Activated T-helper 2 cell treated with anti-CD3 and anti-CD28 coated beads, Interferon-gamma antibody, Interleukin-2, Interleukin-4, amounts not matched to agents 10 μg/mL and 5 μg/mL and 100 μg/mL, durations not matched to agents 14 hours and 24 hours and 36 hours (primary cell): ENCODE measurements at regions of chr3 and their contacts with region 1.

Region 1: GRCh38 chr3:160941885-160942494 is 163.2 kb downstream of the B3GALNT1 start:
- DNase-seq: peak; percentile 32
- H3K4me3 Mint-ChIP-seq: no peak overlapping the region
- H3K27ac Mint-ChIP-seq: no peak overlapping the region
- H3K4me1 Mint-ChIP-seq: peaks cover 3% of the 10 kb centered on the region
- H3K27me3 Mint-ChIP-seq: peaks cover 7% of the 10 kb centered on the region

Region 2: GRCh38 chr3:160686955-160687535 is 254.9 kb before region 1 on chr3:
- intact Hi-C with region 1: loop called (anchors 1 kb)
- DNase-seq: no peak
- H3K4me3 Mint-ChIP-seq: no peak overlapping the region
- H3K27ac Mint-ChIP-seq: no peak overlapping the region
- H3K4me1 Mint-ChIP-seq: no peaks in the 10 kb centered on the region
- H3K27me3 Mint-ChIP-seq: no peaks in the 10 kb centered on the region

Region 3: DNA sequence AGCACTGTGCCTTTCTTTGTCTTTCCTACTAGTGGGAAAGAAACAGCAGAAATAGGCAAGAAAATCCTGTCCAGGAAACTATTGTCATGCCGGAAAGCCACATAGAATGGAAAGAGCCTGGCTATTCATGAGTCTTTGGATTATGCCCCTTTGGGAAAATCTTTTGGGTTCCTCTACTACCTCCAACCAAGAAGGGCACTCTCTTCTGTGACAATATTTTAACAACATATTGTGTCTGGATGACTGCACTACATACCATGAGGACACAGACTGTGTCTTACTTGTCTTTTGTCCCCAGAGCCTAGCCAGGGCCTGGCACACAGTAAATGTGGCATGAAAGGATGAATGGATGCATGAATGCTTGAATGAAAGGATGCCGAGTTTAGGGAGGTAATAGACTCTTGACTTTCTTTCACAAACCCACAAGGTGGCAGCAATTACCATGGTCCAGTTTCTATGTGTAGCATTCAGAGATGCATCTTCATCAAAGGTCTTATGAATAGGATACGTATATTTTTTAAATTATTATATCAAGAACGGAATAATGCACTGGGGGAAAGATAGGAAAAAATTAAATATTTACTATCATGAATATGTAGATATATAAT is 234.7 kb before region 1 on chr3:
- intact Hi-C with region 1: loop called (anchors 1 kb)
- DNase-seq: no peak
- H3K4me3 Mint-ChIP-seq: no peak overlapping the region
- H3K27ac Mint-ChIP-seq: no peak overlapping the region
- H3K4me1 Mint-ChIP-seq: no peaks in the 10 kb centered on the region
- H3K27me3 Mint-ChIP-seq: peaks cover 33% of the 10 kb centered on the region